ENCODE measurements at regions of chr6 and their contacts with region 1.

Region 1: GRCh38 chr6:134938896-134939295 is 11.0 kb downstream of the ALDH8A1 start:
- DNase-seq: no peak
- H3K4me3 ChIP-seq: no peak overlapping the region
- H3K27me3 ChIP-seq: no peaks in the 10 kb centered on the region
- CTCF ChIP-seq: no peak

Region 2: DNA sequence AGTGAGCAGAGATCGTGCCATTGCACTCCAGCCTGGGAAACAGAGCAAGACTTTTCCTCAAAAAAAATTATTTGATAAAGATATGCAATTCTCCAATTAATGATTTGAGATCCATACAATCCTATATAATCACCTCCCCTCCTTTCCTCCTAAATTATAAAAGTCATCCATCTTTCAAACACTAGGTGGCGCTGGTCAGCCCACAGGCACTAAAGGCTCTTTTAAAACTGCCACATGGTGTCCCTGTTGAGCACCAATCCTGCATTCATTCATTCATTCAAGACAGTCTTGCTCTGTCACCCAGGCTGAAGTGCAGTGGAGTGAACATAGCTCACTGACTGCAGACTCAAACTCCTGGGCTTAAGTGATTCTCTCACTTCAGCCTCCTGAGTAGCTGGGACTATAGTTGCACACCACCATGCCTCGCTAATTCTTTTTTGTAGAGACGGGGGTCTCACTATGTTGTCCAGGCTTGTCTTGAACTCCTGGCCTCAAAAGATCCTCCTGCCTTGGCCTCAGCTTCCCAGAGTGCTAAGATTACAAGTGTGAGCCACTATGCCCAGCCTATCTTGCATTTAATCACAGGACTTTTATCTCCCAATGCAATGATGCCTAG is 827.7 kb before region 1 on chr6:
- CTCF ChIA-PET with region 1: interaction called, 10 read pairs
- POLR2A ChIA-PET with region 1: no interaction called
- DNase-seq: no peak
- H3K4me3 ChIP-seq: no peak overlapping the region
- H3K27me3 ChIP-seq: peaks cover 2% of the 10 kb centered on the region; the same call in 1 of the 2 replicates
- CTCF ChIP-seq: peak; percentile 80

Region 3: GRCh38 chr6:134152767-134153485 is 786.0 kb before region 1 on chr6:
- CTCF ChIA-PET with region 1: interaction called, 63 read pairs
- POLR2A ChIA-PET with region 1: no interaction called
- DNase-seq: no peak
- H3K4me3 ChIP-seq: no peak overlapping the region
- H3K27me3 ChIP-seq: no peaks in the 10 kb centered on the region
- CTCF ChIP-seq: no peak

Measured in BJ (cell line).